Posterior vena cava (tissue), 2 donors: ENCODE measurements at regions of chr19 and their contacts with region 1.

Region 1: GRCh38 chr19:15544283-15544682 is 36.0 kb downstream of the CYP4F22 start:
- DNase-seq: no peak

Region 2: GRCh38 chr19:15563931-15564330 is 19.6 kb after region 1 on chr19:
- intact Hi-C with region 1: loop called in 1 of 2 experiments (anchors 1 kb)
- DNase-seq: peak; percentile 58

Region 3: DNA sequence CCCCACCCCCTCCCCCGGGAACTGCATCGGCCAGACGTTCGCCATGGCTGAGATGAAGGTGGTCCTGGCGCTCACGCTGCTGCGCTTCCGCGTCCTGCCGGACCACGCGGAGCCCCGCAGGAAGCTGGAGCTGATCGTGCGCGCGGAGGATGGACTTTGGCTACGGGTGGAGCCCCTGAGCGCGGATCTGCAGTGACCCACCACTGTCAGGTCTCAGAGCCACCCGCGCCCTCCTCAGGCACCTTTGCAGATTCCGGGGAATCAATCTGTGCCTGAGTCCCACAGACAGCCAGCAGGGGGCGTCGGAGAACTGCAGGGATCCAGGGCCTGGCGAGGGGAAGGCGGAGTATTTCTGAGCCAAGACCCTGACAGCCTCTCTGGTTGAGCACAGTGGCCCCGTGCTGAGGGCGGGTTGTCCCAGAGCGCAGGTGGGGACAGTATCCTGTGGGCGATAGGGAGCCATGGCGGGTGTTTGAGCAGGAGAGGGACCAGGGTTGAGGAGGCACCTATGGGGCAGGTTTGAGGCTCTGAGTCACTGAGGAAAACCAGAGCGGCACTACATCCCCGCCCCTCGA is 40.3 kb after region 1 on chr19:
- intact Hi-C with region 1: no loop called
- DNase-seq: peak; percentile 94

Region 4: DNA sequence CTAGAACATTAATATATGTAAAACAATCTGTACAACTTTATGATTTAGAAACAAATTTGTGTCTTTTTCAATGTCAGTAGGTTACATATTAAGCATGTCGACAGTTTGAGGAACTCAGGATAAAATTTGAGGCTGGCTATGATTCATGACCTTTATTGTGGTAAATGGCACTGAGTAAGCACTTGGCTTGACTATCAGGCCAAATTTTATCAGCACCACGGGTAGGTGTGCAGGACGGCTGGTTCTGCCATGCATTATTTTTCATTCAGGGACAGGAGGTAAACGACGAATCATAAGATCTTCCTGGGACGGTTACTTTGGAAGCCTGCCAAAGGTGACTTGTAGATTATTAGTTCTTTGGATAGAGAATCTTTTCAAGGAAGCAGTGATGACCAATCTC is 50.8 kb after region 1 on chr19:
- intact Hi-C with region 1: no loop called
- DNase-seq: no peak